Activated B cell treated with CpG ODN at 0.5 μM for 24 hours (primary cell): ENCODE measurements at regions of chr10 and their contacts with region 1.

Region 1: DNA sequence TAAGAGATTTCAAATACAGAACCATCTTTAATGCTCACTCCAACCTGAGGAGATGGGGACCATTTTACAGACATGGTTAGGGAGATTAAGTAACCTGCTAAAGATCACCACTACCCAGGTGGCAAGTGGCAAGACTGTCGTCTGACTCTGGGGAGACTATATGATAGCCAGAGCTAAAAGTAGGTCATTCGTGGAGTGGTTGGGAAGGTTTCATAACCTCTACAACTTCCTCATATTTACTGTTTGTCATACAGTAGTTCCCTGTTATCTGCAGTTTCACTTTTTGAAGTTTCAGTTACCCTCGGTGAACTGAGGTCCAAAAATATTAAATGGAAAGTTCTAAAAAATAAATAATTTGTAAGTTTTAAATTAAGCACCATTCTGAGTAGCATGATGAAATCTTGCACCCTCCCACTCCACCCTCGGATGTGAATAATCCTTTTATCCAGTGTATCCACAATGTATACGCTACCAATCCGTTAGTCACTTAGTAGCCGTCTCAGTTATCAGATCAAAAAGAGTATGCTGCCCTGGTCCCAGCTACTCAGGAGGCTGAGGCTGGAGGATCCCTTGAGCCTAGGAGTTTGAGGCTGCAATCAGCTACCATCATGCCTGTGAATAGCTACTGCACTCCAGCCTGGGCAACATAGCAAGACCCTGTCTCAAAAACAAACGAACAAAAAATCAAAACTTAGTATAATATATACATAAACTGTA is 14.9 kb upstream of the LGI1 start:
- DNase-seq: no peak
- ATAC-seq: peak; percentile 99
- H3K4me3 Mint-ChIP-seq: peak overlapping the region; percentile 44
- H3K27ac Mint-ChIP-seq: peak overlapping the region; percentile 65
- H3K4me1 Mint-ChIP-seq: peaks cover 18% of the 10 kb centered on the region
- H3K27me3 Mint-ChIP-seq: peaks cover 5% of the 10 kb centered on the region
- CTCF ChIP-seq: no peak

Region 2: GRCh38 chr10:93293999-93294398 is 448.8 kb before region 1 on chr10:
- CTCF ChIA-PET with region 1: no interaction called
- POLR2A ChIA-PET with region 1: no interaction called
- intact Hi-C with region 1: no loop called
- DNase-seq: no peak
- ATAC-seq: no peak
- H3K4me3 Mint-ChIP-seq: no peak overlapping the region
- H3K27ac Mint-ChIP-seq: no peak overlapping the region
- H3K4me1 Mint-ChIP-seq: no peaks in the 10 kb centered on the region
- H3K27me3 Mint-ChIP-seq: no peaks in the 10 kb centered on the region
- CTCF ChIP-seq: no peak

Region 3: GRCh38 chr10:93687737-93688136 is 55.1 kb before region 1 on chr10:
- CTCF ChIA-PET with region 1: no interaction called
- POLR2A ChIA-PET with region 1: no interaction called
- intact Hi-C with region 1: no loop called
- DNase-seq: no peak
- ATAC-seq: no peak
- H3K4me3 Mint-ChIP-seq: no peak overlapping the region
- H3K27ac Mint-ChIP-seq: no peak overlapping the region
- H3K4me1 Mint-ChIP-seq: no peaks in the 10 kb centered on the region
- H3K27me3 Mint-ChIP-seq: no peaks in the 10 kb centered on the region
- CTCF ChIP-seq: no peak

Region 4: DNA sequence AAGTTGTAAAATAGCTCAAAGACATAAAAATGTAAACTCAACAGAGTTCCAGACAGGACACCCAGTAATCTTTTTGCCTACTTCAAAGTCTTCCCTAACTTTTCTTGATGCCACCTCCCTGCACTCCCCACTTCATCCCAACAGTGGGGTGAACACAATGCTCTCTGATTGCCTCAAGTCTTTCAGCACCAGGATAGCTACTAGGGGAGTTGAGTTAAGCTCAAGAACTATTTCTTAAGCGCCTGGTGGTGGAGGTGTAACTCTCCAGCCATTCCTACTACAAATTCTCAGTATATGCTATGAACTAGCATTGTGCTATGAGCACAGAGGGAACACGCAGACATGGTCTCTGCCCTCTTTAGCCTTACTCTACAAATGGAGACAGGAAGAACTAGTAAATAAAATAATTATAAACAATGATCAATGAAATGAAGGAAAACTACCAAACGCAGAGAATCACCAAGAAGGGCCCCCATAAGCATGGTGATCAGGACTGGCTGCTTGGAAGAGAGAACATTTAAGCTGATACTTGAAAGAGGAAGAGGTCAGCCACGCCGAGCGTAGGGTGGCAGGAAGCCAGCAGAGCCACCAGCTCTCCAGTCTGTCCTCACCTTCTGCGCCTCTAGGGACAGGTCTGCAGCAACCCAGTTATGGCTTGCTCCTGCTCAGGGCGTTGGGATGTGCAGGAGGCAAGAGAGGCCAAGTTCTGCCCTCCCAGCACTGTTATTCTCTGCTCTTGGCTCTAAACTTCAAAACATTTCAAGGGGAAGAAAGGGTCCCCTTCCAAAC is 23.7 kb before region 1 on chr10:
- CTCF ChIA-PET with region 1: no interaction called
- POLR2A ChIA-PET with region 1: interaction called, 4 read pairs
- intact Hi-C with region 1: loop called (anchors 2 kb)
- DNase-seq: no peak
- ATAC-seq: peak; percentile 27
- H3K4me3 Mint-ChIP-seq: no peak overlapping the region
- H3K27ac Mint-ChIP-seq: no peak overlapping the region
- H3K4me1 Mint-ChIP-seq: peaks cover 23% of the 10 kb centered on the region
- H3K27me3 Mint-ChIP-seq: peaks cover 19% of the 10 kb centered on the region
- CTCF ChIP-seq: no peak

Region 5: DNA sequence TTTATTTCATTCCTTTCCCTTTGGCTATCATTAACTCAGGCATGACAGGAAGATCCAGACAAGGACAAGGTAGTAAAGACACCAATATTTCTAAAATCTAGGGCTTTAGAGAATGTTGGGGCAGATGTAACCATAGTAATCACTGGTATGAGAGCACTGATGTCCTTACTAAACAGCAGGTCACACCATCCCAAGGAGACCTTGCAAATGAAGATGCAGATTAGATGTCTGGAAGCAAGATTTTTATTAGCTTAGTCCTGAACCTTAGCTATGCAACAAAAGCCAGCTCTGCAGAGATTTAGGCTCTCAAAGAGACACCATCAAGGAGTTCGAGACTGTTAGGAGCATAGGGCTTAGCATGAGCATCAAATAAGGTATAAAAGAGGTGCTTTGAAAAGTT is 16.8 kb before region 1 on chr10:
- CTCF ChIA-PET with region 1: no interaction called
- POLR2A ChIA-PET with region 1: no interaction called
- intact Hi-C with region 1: loop called (anchors 1 kb)
- DNase-seq: no peak
- ATAC-seq: no peak
- H3K4me3 Mint-ChIP-seq: no peak overlapping the region
- H3K27ac Mint-ChIP-seq: no peak overlapping the region
- H3K4me1 Mint-ChIP-seq: no peaks in the 10 kb centered on the region
- H3K27me3 Mint-ChIP-seq: peaks cover 29% of the 10 kb centered on the region
- CTCF ChIP-seq: no peak